Panc1 (cell line): ENCODE measurements at regions of chr1 and their contacts with region 1.

Region 1: GRCh38 chr1:218851586-218851985 is 322.1 kb upstream of the LYPLAL1 start:
- DNase-seq: no peak
- ATAC-seq: no peak
- H3K4me3 ChIP-seq: no peak overlapping the region
- H3K27ac ChIP-seq: no peak overlapping the region
- H3K4me1 ChIP-seq: no peaks in the 10 kb centered on the region; the same call in 1 of the 2 replicates
- H3K27me3 ChIP-seq: no peaks in the 10 kb centered on the region
- CTCF ChIP-seq: no peak

Region 2: DNA sequence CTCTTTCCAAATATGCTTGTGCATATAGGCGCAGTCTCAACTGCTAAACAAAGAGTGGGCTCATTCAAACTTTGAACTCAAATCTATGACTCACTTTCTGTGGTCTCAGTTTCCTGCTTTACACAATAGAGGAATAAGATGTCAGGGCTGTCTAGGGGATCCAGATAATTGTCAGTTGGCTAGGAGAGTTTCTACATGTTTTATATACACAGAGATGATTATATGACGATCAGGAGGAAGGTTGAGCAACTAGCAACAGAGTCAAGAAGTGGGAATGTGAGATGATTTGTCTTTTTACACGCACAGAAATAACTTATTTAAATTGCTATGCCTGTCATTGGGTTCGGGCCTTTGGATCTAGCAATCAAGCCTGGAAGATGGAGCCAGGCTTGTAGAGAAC is 22.7 kb after region 1 on chr1:
- CTCF ChIA-PET with region 1: no interaction called
- POLR2A ChIA-PET with region 1: interaction called, 15 read pairs
- in situ Hi-C with region 1: no loop called
- intact Hi-C with region 1: no loop called
- DNase-seq: no peak
- ATAC-seq: no peak
- H3K4me3 ChIP-seq: no peak overlapping the region
- H3K27ac ChIP-seq: no peak overlapping the region
- H3K4me1 ChIP-seq: no peaks in the 10 kb centered on the region
- H3K27me3 ChIP-seq: no peaks in the 10 kb centered on the region
- CTCF ChIP-seq: no peak